ENCODE measurements at regions of chr19 and their contacts with region 1.

Region 1: GRCh38 chr19:16791960-16792359 is 37.2 kb upstream of the SIN3B start:
- DNase-seq: no peak
- H3K4me3 ChIP-seq: no peak overlapping the region
- H3K27ac ChIP-seq: no peak overlapping the region
- H3K4me1 ChIP-seq: no peaks in the 10 kb centered on the region
- H3K27me3 ChIP-seq: no peaks in the 10 kb centered on the region
- CTCF ChIP-seq: no peak

Region 2: DNA sequence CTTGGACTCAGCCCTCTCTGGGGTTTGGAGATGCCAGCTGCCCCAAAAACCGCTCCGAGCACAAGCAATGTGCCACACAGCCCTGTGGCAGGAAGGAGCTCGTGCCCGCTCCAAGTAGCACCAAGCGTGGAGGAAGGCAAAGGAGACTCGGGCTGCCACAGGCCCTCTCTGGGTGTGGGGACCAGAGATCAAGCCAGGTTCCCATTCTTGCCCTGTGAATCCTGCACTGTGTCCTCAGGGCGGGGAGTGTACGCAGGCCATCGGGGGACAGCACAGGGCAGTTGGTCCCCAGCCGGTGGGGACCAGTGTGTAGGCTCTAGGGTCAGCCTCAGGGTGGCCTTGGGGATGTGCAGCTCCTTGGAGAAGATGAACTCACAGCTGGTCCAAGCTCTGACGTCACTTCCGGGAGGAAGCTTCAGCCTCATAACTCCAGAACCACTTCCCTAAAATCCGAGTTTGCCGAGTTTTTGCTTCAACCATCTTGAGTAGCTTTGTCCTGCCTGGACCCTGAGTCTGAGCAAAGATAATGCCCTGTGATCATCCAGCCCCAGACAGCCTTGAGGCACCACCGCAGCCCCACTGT is 244.0 kb after region 1 on chr19:
- CTCF ChIA-PET with region 1: no interaction called
- dilution Hi-C with region 1: loop called (anchors 5 kb)
- in situ Hi-C with region 1: loop called in 1 of 2 experiments (anchors 10 kb)
- intact Hi-C with region 1: no loop called
- DNase-seq: no peak
- H3K4me3 ChIP-seq: no peak overlapping the region
- H3K27ac ChIP-seq: no peak overlapping the region
- H3K4me1 ChIP-seq: no peaks in the 10 kb centered on the region
- H3K27me3 ChIP-seq: no peaks in the 10 kb centered on the region
- CTCF ChIP-seq: no peak